ENCODE measurements at regions of chr14 and their contacts with region 1.

Region 1: GRCh38 chr14:28785096-28785952 is 18.7 kb downstream of the FOXG1 start:
- ATAC-seq: peak in 7 of 8 experiments; percentile 43 to 98 (median 81)
- H3K4me3 ChIP-seq: peak overlapping the region; percentile 15 to 40 (median 35)
- H3K27ac ChIP-seq: no peak overlapping the region
- H3K4me1 ChIP-seq: peaks cover 5% of the 10 kb centered on the region in 2 donors

Region 2: GRCh38 chr14:28875934-28876571 is 90.7 kb after region 1 on chr14:
- in situ Hi-C with region 1: no loop called
- ATAC-seq: peak in 5 of 8 experiments; percentile 59 to 74 (median 69)
- H3K4me3 ChIP-seq: no peak overlapping the region
- H3K27ac ChIP-seq: no peak overlapping the region
- H3K4me1 ChIP-seq: peaks cover 23% of the 10 kb centered on the region in 2 donors

Region 3: DNA sequence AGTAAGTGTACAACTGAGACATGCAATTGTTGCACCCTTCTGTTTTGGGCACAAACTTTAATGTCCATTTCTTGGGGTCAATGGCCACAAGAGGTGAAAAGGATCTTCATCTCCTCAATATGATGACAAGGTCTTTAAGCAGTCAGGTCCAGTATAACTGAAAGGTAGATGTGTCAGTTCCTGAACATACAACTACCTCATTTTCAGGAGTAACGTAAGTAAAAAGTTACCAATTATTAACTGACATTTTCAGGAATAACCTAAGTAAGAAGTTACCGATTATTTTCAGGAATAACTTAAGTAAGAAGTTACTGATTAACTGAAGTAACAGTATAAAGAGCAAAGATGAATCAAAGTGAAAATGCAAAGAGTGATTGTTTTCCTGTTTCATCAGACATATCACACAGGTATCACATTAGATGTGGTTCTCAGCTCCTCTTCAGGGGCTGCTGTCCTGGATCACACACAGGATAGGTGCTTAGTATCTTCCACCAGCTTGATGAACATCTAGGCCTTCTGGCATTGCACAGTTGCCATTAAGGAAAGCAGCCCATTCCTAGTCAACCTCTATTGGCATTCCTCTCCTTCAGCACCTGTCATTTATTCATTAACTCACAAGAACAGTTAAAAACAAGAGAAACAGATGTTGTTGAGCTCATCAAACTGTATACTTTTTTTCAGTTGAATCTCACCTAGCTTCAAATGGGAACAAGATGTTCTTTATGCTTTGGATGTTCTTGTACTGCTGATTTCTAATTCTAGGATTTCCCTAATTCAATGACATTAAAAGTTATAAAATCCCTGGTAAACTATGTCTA is 181.3 kb after region 1 on chr14:
- in situ Hi-C with region 1: loop called in 1 of 9 experiments (anchors 25 kb)
- ATAC-seq: no peak
- H3K4me3 ChIP-seq: no peak overlapping the region
- H3K27ac ChIP-seq: no peak overlapping the region
- H3K4me1 ChIP-seq: no peaks in the 10 kb centered on the region

Region 4: GRCh38 chr14:29222671-29223268 is 437.4 kb after region 1 on chr14:
- in situ Hi-C with region 1: loop called in 2 of 9 experiments (anchors 10 to 25 kb)
- ATAC-seq: peak in 2 of 8 experiments; percentile 53 to 62
- H3K4me3 ChIP-seq: no peak overlapping the region
- H3K27ac ChIP-seq: no peak overlapping the region
- H3K4me1 ChIP-seq: peaks cover 3 to 10% of the 10 kb centered on the region in 2 donors